ENCODE measurements at regions of chr18 and their contacts with region 1.

Region 1: DNA sequence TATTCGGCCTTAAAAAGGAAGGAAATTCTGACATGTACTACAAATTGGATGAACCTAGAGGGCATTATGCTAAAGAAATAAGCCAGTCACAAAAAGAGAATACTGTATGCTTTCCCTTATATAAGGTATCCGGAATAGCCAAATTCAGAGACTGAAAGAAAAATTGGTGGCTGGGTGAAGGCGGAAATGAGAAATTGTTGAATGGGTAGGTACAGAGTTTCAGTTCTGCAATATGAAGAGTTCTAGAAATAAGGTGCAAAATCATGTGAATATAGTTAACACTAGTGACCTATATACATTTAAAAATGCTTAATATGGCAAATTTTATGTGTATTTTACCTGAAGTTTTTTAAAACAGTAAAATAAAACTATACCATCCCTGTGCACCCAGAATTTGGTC is 43.1 kb downstream of the RMP24 start:
- DNase-seq: no peak
- H3K4me3 ChIP-seq: no peak overlapping the region
- H3K27ac ChIP-seq: no peak overlapping the region
- H3K4me1 ChIP-seq: no peaks in the 10 kb centered on the region
- H3K27me3 ChIP-seq: no peaks in the 10 kb centered on the region
- CTCF ChIP-seq: no peak
- POLR2A ChIP-seq: no peak

Region 2: DNA sequence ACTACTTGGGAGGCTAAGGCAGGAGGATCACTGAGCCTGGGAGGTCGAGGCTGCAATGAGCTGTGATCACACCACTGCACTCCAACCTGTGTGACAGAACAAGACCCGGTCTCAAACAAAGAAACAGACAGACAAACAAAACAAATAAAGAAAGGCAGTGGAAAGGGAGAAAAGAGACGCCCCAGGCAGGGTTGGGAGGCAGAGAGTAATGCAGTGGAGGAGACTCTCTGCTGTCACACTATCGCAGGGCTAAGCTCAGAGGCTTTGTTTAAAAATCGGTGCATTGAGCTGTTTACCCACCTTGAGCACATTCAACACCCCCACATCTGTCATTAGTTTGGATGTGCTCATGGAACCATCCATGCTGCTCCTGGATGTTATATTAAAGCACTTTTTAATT is 127.3 kb before region 1 on chr18:
- intact Hi-C with region 1: no loop called
- DNase-seq: no peak
- H3K4me3 ChIP-seq: no peak overlapping the region
- H3K27ac ChIP-seq: no peak overlapping the region
- H3K4me1 ChIP-seq: no peaks in the 10 kb centered on the region
- H3K27me3 ChIP-seq: no peaks in the 10 kb centered on the region
- CTCF ChIP-seq: no peak
- POLR2A ChIP-seq: no peak

Region 3: DNA sequence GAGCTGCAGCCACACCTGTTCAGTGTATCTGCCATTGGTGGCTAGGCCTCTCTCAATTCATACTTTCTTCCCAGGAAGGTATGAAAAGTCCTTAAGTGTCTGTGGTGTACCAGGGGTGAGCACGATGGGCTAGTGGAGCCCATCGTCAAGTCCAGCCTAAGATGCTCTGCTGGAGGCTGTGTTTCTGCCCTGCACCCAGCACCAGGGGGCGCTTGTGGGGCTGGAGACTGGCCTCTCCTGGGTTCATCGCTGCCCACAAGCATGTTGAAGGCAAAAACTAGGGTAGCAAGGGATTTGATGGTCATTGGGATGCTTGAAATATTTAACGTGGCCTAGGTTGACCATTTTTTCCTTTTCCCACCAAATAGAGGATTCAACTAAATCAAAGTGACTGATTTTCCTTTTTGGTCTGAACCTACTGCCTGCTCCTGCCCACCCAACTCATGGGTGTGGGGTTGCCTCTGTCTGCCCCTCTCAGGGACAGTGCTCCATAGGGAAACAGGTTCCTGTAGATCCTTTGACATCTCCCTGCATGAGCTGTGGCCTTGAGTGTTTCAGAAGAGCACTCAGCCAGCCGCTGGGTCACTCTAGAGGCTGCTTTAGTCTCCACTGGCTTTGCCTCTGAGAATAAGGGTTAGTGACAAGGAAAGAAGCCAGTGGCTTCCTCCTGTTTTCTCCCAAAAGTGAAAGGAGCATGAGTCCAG is 754.1 kb after region 1 on chr18:
- intact Hi-C with region 1: loop called (anchors 5 kb)
- DNase-seq: no peak
- H3K4me3 ChIP-seq: no peak overlapping the region
- H3K27ac ChIP-seq: no peak overlapping the region
- H3K4me1 ChIP-seq: no peaks in the 10 kb centered on the region
- H3K27me3 ChIP-seq: no peaks in the 10 kb centered on the region
- CTCF ChIP-seq: no peak
- POLR2A ChIP-seq: no peak

Measured in breast epithelium (tissue), 4 donors.